PC-9 (cell line): ENCODE measurements at regions of chr11 and their contacts with region 1.

Region 1: GRCh38 chr11:78131956-78132355 is 7.5 kb downstream of the ALG8 start:
- DNase-seq: no peak
- H3K4me3 ChIP-seq: no peak overlapping the region
- H3K27ac ChIP-seq: no peak overlapping the region
- H3K4me1 ChIP-seq: no peaks in the 10 kb centered on the region
- H3K27me3 ChIP-seq: no peaks in the 10 kb centered on the region
- CTCF ChIP-seq: no peak

Region 2: DNA sequence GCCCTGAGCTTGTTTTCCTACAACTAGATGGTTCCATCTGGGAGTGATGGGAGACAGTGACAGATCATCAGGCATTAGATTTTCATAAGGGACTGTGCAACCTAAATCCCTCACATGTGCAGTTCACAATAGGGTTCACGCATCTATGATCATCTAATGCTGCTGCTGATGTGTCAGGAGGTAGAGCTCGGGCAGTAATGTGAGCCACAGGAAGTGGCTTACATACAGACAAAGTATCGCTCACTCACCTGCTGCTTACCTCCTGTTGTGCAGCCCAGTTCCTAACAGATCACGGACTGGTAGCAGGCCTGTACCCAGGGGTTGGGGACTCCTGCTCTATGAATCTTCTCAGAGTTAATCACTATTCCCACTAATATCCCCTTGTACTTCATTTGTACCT is 298.7 kb before region 1 on chr11:
- CTCF ChIA-PET with region 1: no interaction called
- POLR2A ChIA-PET with region 1: interaction called, 14 read pairs
- intact Hi-C with region 1: no loop called
- DNase-seq: no peak
- H3K4me3 ChIP-seq: no peak overlapping the region
- H3K27ac ChIP-seq: no peak overlapping the region
- H3K4me1 ChIP-seq: no peaks in the 10 kb centered on the region
- H3K27me3 ChIP-seq: no peaks in the 10 kb centered on the region
- CTCF ChIP-seq: no peak

Region 3: GRCh38 chr11:78011301-78011700 is 120.7 kb before region 1 on chr11:
- CTCF ChIA-PET with region 1: no interaction called
- POLR2A ChIA-PET with region 1: no interaction called
- intact Hi-C with region 1: no loop called
- DNase-seq: no peak
- H3K4me3 ChIP-seq: no peak overlapping the region
- H3K27ac ChIP-seq: no peak overlapping the region
- H3K4me1 ChIP-seq: no peaks in the 10 kb centered on the region
- H3K27me3 ChIP-seq: no peaks in the 10 kb centered on the region
- CTCF ChIP-seq: no peak

Region 4: DNA sequence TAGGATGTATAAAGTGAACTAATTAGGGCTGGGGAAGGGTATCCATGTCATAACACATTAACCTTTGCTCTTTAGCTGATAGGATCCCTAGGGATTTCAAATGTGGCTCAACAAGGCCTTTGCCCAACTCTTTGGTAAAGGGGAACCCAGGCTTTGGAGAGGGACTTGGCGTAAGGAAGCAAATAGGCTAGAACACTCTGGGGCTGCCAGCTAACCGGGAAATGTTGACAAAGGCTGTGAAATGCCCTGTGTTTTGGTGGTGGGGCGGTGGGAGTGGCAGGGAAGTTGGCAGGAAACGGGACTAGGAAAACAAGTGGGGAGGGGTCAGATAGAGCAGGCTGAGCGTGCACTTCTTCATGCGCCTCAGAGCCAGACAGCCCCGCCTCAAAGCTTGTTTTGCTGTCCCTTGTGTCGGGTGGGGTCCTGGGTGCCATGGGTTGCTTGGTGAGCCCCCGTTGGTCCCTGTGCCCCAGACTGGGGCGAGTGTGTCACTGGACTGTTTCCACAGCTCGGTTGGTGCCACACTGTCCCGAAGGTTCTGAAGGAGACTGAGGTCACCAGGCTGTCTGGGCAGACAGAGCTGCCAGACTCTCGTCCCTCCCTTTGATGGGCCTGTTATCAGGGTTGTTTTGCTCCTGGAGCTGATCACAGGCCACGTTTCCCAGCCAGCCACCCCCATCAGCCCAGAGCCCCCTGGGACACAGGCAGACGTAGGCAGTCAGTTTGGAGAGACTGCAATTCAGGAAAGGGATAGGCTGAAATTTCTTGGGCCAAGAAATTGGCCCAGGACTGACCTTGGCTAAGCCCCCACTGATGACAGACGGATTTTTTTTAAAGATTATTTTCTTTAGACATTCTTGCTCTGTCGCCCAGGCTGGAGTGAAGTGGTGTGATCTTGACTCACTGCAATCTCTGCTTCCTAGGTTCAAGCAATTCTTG is 36.9 kb after region 1 on chr11:
- CTCF ChIA-PET with region 1: no interaction called
- POLR2A ChIA-PET with region 1: no interaction called
- intact Hi-C with region 1: no loop called
- DNase-seq: no peak
- H3K4me3 ChIP-seq: no peak overlapping the region
- H3K27ac ChIP-seq: no peak overlapping the region
- H3K4me1 ChIP-seq: no peaks in the 10 kb centered on the region
- H3K27me3 ChIP-seq: no peaks in the 10 kb centered on the region
- CTCF ChIP-seq: no peak

Region 5: GRCh38 chr11:78188286-78189173 is 56.6 kb after region 1 on chr11 and contains the starts of genes KCTD21 and USP35:
- CTCF ChIA-PET with region 1: no interaction called
- POLR2A ChIA-PET with region 1: no interaction called
- intact Hi-C with region 1: no loop called
- DNase-seq: peak; percentile 97 to 99
- H3K4me3 ChIP-seq: peak within 1 kb of the TSS; percentile 80
- H3K27ac ChIP-seq: no peak within 1 kb of the TSS
- H3K4me1 ChIP-seq: peaks cover 43% of the 10 kb centered on the region
- H3K27me3 ChIP-seq: no peaks in the 10 kb centered on the region
- CTCF ChIP-seq: no peak
- total RNA-seq, gene KCTD21: 16.1 and 16.5 TPM in 2 replicates
- total RNA-seq, gene USP35: 12.8 and 13.5 TPM in 2 replicates